IMR-90 (cell line): ENCODE measurements at regions of chr16 and their contacts with region 1.

Region 1: GRCh38 chr16:49592546-49593423 is 219.2 kb downstream of the C16orf78 start:
- DNase-seq: peak; percentile 7
- ATAC-seq: peak; percentile 78
- H3K4me3 ChIP-seq: no peak overlapping the region
- H3K27ac ChIP-seq: no peak overlapping the region
- H3K4me1 ChIP-seq: no peaks in the 10 kb centered on the region
- H3K27me3 ChIP-seq: peaks cover 21% of the 10 kb centered on the region
- CTCF ChIP-seq: peak; percentile 55
- POLR2A ChIP-seq: no peak
- RAD21 ChIP-seq: 0 out of 2 replicates have a peak, but pooled peaks have one; percentile 25

Region 2: DNA sequence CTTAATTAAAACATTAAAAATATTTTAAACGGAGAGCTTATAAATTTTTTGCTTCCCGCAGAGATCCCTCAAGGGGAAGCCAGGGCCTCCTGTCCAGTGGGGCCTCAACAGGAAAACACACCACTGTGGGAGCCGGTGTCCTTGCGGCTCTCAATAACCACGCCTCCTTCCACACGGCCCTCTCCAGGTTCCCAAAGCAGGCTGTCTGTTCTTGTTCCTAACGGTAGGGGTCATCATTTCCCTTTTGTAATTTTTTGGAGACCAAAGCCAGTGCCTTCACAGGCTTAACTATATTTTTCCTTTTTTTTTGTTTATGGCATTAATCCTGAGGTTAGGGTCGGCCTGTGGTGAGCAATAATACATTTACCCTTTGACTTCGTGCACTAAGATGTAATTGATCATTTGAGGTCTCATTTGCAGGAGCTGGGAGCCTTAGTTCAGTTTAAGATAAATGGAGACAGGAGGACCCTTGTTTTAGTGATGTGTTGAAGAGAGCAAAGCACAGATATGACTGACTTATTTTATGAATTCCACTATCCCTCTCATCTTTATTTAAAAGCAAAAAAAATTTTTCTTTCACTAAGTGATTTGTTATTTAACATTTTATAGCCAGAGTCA is 905.3 kb before region 1 on chr16:
- CTCF ChIA-PET with region 1: no interaction called
- POLR2A ChIA-PET with region 1: no interaction called
- dilution Hi-C with region 1: no loop called
- in situ Hi-C with region 1: no loop called
- intact Hi-C with region 1: loop called (anchors 2 kb)
- DNase-seq: peak; percentile 67
- ATAC-seq: peak; percentile 100
- H3K4me3 ChIP-seq: no peak overlapping the region
- H3K27ac ChIP-seq: no peak overlapping the region
- H3K4me1 ChIP-seq: no peaks in the 10 kb centered on the region
- H3K27me3 ChIP-seq: no peaks in the 10 kb centered on the region; the same call in 1 of the 2 replicates
- CTCF ChIP-seq: peak; percentile 84
- POLR2A ChIP-seq: no peak
- RAD21 ChIP-seq: peak; percentile 81

Region 3: DNA sequence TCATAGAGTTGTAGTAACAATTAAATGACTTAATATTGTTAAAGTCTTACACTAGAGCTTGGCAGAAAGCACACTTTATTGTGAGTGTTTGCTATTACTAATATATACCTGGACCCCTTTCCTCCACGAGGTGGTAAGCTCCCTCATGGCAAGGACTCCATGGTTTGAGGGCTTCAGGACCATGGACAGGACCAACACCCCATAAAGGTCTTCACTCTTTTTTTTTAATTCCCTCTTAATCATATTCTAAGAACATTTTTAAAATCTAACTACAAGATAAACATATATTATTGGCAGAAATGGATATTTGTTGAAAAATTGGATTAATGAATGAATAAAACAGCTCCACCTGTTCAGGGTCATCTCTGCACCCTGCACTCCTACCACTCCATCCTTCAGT is 465.7 kb before region 1 on chr16:
- CTCF ChIA-PET with region 1: no interaction called
- POLR2A ChIA-PET with region 1: no interaction called
- dilution Hi-C with region 1: no loop called
- in situ Hi-C with region 1: no loop called
- intact Hi-C with region 1: no loop called
- DNase-seq: no peak
- ATAC-seq: no peak
- H3K4me3 ChIP-seq: no peak overlapping the region
- H3K27ac ChIP-seq: no peak overlapping the region
- H3K4me1 ChIP-seq: no peaks in the 10 kb centered on the region
- H3K27me3 ChIP-seq: no peaks in the 10 kb centered on the region
- CTCF ChIP-seq: no peak
- POLR2A ChIP-seq: no peak
- RAD21 ChIP-seq: no peak

Region 4: DNA sequence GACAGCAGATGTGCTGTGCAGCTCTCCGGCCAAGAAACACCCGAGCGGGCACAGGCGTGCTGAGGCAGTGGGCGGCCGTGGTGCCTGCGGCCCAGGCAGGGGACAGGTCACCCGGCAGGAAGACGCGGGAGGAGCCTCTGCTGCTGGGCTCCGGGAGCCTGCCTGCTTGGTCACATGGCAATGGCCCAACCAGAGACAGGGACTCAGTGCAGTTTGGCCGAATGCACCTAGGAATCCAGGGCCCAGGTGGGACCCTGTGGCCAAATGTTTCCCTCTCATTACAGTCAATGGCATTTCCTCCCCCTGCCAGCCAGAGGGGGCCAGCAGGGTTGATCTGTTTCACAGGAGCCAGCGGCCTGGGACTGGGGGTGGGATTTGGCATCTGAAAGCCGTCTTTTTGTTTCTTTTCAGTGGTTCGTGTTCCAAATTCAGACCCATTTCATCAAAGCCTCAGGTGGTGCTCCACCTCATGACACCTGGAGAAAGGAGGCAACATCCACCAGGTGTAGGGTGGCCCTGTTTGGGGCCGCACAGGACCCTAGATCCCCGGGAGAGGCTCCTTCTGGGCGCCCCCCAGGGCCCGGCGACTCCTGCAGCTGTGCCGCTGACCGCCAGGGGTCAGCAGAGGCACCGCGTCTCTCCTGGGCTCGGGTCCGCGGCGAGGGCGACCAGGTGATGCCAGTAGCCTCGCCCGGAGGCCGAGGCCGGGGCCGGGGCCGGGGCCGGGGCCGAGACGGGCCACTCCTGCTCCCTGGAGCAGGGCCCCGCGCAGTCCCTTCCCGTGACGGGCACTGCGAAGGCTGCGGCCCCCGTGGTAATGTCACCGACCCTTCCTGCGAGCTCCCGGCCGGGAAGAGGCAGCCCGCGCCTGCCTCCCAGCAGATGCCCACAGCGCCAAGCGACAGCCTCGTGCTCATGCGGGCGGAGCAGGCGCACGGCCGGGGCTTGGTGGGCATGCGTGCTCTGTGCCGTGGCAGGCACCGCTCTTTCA is 100.7 kb before region 1 on chr16:
- CTCF ChIA-PET with region 1: no interaction called
- POLR2A ChIA-PET with region 1: no interaction called
- dilution Hi-C with region 1: no loop called
- in situ Hi-C with region 1: no loop called
- intact Hi-C with region 1: loop called (anchors 2 kb)
- DNase-seq: no peak
- ATAC-seq: peak; percentile 93
- H3K4me3 ChIP-seq: no peak overlapping the region
- H3K27ac ChIP-seq: no peak overlapping the region
- H3K4me1 ChIP-seq: no peaks in the 10 kb centered on the region
- H3K27me3 ChIP-seq: no peaks in the 10 kb centered on the region
- CTCF ChIP-seq: peak; percentile 59
- POLR2A ChIP-seq: no peak
- RAD21 ChIP-seq: peak; percentile 37

Region 5: DNA sequence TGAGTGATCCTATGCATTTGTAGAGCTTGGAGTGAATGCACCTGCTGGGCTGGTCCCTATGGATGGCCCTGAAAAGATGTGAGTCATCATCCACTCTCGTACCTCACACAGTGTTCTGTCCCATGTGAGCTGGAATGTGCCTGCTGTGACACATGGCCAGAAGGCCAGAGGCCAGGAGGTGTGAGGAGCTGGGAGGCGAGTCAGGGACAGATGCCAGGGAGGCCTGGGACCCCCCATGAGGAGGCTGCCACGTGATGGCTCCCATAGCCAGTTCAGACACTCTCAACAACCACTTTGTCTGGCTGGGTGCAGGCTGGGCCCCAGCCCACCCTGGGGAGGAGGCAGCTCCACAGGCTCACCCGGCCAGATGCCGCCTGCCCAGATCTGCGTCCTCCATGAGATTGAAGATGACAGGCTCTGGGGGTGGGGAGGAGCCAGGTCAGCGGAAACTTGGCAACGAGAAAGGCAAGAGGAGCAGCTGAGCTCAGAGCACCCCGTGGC is 50.3 kb before region 1 on chr16:
- CTCF ChIA-PET with region 1: no interaction called
- POLR2A ChIA-PET with region 1: no interaction called
- dilution Hi-C with region 1: no loop called
- in situ Hi-C with region 1: no loop called
- intact Hi-C with region 1: no loop called
- DNase-seq: no peak
- ATAC-seq: no peak
- H3K4me3 ChIP-seq: no peak overlapping the region
- H3K27ac ChIP-seq: no peak overlapping the region
- H3K4me1 ChIP-seq: no peaks in the 10 kb centered on the region
- H3K27me3 ChIP-seq: no peaks in the 10 kb centered on the region; the same call in 1 of the 2 replicates
- CTCF ChIP-seq: no peak
- POLR2A ChIP-seq: no peak
- RAD21 ChIP-seq: no peak

Region 6: GRCh38 chr16:49556606-49557446 is 36.0 kb before region 1 on chr16:
- CTCF ChIA-PET with region 1: no interaction called
- POLR2A ChIA-PET with region 1: no interaction called
- dilution Hi-C with region 1: no loop called
- in situ Hi-C with region 1: no loop called
- intact Hi-C with region 1: loop called (anchors 1 kb)
- DNase-seq: peak; percentile 35
- ATAC-seq: peak; percentile 72
- H3K4me3 ChIP-seq: no peak overlapping the region
- H3K27ac ChIP-seq: no peak overlapping the region
- H3K4me1 ChIP-seq: no peaks in the 10 kb centered on the region
- H3K27me3 ChIP-seq: peaks cover 2% of the 10 kb centered on the region; the same call in 1 of the 2 replicates
- CTCF ChIP-seq: peak; percentile 34
- POLR2A ChIP-seq: no peak
- RAD21 ChIP-seq: peak; percentile 41

Region 7: DNA sequence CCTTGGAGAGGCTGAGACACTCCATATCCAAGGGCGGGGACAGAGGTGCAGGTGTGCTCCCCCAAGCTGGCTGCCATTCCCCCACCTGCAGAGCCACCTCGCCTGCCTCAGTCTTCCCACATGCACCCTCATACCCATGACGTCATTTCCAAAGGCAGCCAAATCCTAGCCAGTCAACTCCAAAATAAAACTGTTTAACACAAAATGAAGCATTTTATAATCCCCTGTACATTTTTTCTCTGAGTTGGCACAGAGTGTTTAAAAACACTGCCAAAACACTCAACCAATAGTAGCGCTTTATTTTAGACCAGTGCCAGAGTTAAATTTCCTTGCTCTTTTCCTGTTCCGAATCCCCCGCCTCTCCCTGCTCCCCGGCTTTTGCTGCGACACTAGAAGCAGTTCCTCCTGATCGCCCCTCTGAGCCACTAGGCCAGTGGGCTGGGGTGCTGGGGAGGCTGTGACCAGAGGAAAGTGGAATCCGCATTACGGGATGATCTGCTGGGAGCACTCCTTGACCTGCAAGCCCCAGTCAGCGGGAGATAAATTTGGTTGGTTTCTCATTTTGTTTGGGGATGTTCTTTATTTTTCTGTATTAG is 123.7 kb after region 1 on chr16:
- CTCF ChIA-PET with region 1: no interaction called
- POLR2A ChIA-PET with region 1: no interaction called
- dilution Hi-C with region 1: no loop called
- in situ Hi-C with region 1: no loop called
- intact Hi-C with region 1: no loop called
- DNase-seq: no peak
- ATAC-seq: no peak
- H3K4me3 ChIP-seq: no peak overlapping the region
- H3K27ac ChIP-seq: no peak overlapping the region
- H3K4me1 ChIP-seq: no peaks in the 10 kb centered on the region
- H3K27me3 ChIP-seq: no peaks in the 10 kb centered on the region; the same call in 1 of the 2 replicates
- CTCF ChIP-seq: no peak
- POLR2A ChIP-seq: no peak
- RAD21 ChIP-seq: no peak

Region 8: GRCh38 chr16:49986351-49987124 is 393.8 kb after region 1 on chr16:
- CTCF ChIA-PET with region 1: no interaction called
- POLR2A ChIA-PET with region 1: no interaction called
- dilution Hi-C with region 1: no loop called
- in situ Hi-C with region 1: no loop called
- intact Hi-C with region 1: no loop called
- DNase-seq: peak; percentile 27
- ATAC-seq: no peak; the same call in 1 of the 2 replicates
- H3K4me3 ChIP-seq: no peak overlapping the region
- H3K27ac ChIP-seq: no peak overlapping the region
- H3K4me1 ChIP-seq: no peaks in the 10 kb centered on the region
- H3K27me3 ChIP-seq: peaks cover 1% of the 10 kb centered on the region; the same call in 1 of the 2 replicates
- CTCF ChIP-seq: no peak
- POLR2A ChIP-seq: no peak
- RAD21 ChIP-seq: no peak